ENCODE measurements at regions of chr5 and their contacts with region 1.

Region 1: DNA sequence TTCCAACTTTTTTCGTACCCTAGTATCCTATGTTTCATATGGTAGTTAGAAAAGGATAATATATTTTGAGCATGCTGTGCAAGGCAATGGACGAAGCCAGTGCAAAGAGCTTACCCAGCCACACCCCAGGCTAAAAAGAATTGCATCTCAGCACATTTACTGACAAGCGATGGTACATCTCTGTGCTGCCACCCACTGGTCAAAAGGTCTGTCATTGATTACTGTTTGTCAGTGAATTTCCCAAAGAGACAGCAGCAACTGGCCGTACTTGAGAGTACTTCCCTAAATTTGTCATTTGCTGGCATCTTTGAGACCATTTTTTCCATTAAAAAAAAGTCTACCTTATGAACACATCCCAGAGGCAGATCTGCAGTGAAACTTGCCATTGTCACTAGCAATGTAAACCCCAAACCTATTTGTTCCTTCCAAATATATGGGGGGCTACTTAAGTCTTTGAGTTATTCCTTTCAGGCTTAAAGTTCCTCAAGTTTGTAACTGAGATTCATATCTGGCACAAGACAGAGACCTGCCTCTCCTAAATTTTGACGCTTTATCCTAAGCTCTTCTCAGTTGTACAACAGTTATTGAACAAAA is 184.3 kb downstream of the CTNND2 start:
- DNase-seq: peak in 1 of 2 donors; percentile 39
- ATAC-seq: peak in 4 of 8 donors; percentile 33 to 57 (median 52)
- H3K4me3 ChIP-seq: no peak overlapping the region
- H3K27ac ChIP-seq: no peak overlapping the region
- H3K4me1 ChIP-seq: no peaks in the 10 kb centered on the region
- H3K27me3 ChIP-seq: no peaks in the 10 kb centered on the region
- CTCF ChIP-seq: peak in 8 of 9 donors; percentile 11 to 54 (median 39)

Region 2: GRCh38 chr5:11266331-11266730 is 453.7 kb before region 1 on chr5:
- intact Hi-C with region 1: loop called in 2 of 10 experiments (anchors 2 to 5 kb)
- DNase-seq: no peak
- ATAC-seq: no peak
- H3K4me3 ChIP-seq: no peak overlapping the region
- H3K27ac ChIP-seq: no peak overlapping the region
- H3K4me1 ChIP-seq: no peaks in the 10 kb centered on the region
- H3K27me3 ChIP-seq: no peaks in the 10 kb centered on the region
- CTCF ChIP-seq: no peak

Region 3: DNA sequence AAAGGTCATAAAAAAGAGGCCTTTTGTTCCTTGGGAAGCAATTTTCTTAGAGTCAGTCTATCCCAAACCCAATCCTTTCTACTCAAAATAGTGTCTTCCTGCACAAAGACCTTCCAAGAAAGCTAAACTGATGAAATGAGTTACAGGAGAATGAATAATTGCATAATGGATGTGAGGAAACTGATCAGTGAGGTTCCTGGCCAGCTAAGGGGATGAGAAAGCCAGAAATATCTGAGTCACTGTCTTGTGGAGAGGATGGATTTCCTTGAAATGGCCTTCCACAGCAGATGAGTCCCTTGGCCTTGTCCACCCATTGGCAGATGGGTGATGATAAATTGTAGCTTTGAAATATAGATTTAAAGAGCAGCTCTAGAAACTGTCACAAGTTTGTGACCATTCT is 1468.4 kb after region 1 on chr5:
- intact Hi-C with region 1: no loop called
- DNase-seq: no peak
- ATAC-seq: peak in 1 of 8 donors; percentile 47
- H3K4me3 ChIP-seq: no peak overlapping the region
- H3K27ac ChIP-seq: no peak overlapping the region
- H3K4me1 ChIP-seq: no peaks in the 10 kb centered on the region
- H3K27me3 ChIP-seq: no peaks in the 10 kb centered on the region
- CTCF ChIP-seq: no peak

Region 4: GRCh38 chr5:13566871-13567339 is 1846.9 kb after region 1 on chr5:
- intact Hi-C with region 1: loop called in 1 of 10 experiments (anchors 10 kb)
- DNase-seq: no peak
- ATAC-seq: no peak
- H3K4me3 ChIP-seq: no peak overlapping the region
- H3K27ac ChIP-seq: no peak overlapping the region
- H3K4me1 ChIP-seq: no peaks in the 10 kb centered on the region
- H3K27me3 ChIP-seq: peaks cover 0 to 4% (median 0%) of the 10 kb centered on the region in 7 donors
- CTCF ChIP-seq: no peak

Measured in heart right ventricle (tissue), 16 donors.